Calu3 (cell line): ENCODE measurements at regions of chr11 and their contacts with region 1.

Region 1: GRCh38 chr11:12802418-12803085 is 128.3 kb downstream of the TEAD1 start:
- DNase-seq: peak; percentile 93
- H3K4me3 Mint-ChIP-seq: peak overlapping the region; percentile 66
- H3K27ac Mint-ChIP-seq: peak overlapping the region; percentile 99
- H3K4me1 Mint-ChIP-seq: peaks cover 99% of the 10 kb centered on the region
- H3K27me3 Mint-ChIP-seq: no peaks in the 10 kb centered on the region
- CTCF ChIP-seq: no peak

Region 2: DNA sequence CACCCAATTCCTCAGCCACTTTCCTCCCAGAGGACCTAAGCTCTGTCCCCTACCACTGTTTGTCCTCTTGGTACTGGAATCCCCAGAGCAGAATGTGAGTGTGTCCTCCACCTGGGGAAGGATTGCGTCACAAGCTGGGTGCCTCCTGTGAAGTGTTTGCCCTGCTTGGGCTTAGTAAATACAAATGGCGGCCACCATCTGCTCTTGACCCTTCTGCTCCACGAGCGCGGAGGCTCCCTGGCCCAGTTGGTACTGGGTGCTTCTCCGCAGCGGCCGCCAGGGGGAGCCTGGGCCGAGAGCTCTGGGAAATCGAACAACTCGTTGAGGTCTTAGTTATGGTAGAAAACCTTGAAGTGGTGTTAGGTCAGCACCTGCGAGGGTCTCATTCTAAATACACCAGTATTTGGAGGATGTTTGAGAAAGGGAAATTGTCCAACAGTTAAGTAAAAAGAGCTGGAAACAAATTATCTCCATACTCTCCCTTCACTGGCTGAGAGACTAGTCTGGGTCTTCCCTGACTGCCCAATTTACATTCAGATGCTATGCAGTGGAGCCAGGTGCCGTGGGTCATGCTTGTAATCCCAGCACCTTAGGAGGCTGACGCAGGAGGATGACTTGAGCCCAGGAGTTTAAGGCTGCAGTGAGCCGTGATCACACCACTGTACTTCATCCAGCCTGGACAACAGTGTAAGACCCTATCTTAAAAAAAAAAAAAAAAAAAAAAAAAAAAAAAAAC is 203.0 kb before region 1 on chr11:
- CTCF ChIA-PET with region 1: interaction called, 3 read pairs
- intact Hi-C with region 1: loop called (anchors 10 kb)
- DNase-seq: peak; percentile 78
- H3K4me3 Mint-ChIP-seq: no peak overlapping the region
- H3K27ac Mint-ChIP-seq: no peak overlapping the region
- H3K4me1 Mint-ChIP-seq: peaks cover 12% of the 10 kb centered on the region
- H3K27me3 Mint-ChIP-seq: no peaks in the 10 kb centered on the region
- CTCF ChIP-seq: peak; percentile 89

Region 3: DNA sequence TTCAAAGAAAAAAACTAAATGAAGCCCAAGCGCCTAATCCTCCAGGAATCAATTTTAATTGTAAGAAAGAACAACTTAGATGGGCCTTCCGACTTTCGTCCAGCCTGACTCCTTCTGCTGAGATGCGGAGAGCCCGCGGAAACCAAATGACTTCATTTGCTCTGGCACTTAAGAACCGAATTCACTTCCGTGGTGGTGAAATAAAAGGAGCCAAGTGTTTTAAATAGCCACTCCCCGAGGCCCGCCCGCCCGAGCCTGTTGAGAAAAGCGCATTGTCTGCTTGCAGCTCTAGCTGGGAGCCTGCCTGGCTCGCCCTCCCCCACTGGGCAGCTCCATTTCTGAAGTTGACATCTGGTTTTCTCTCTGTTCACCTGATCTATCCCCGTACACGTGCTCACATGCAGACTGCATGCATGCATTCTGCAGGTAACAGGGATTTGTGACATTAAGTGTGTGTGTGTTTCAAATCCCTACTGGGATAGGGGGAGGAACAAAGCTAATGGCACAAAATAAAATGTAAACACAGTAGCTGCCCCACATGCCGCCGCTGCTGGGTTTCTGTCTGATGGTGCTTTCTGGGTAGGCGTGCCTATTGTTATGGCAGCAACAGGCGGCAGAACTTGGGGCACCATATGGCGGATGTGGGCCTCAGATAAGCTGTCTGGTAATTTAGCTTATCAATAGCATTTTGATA is 122.2 kb before region 1 on chr11:
- CTCF ChIA-PET with region 1: interaction called, 4 read pairs
- intact Hi-C with region 1: loop called (anchors 2 kb)
- DNase-seq: peak; percentile 90
- H3K4me3 Mint-ChIP-seq: peak overlapping the region; percentile 59
- H3K27ac Mint-ChIP-seq: peak overlapping the region; percentile 79
- H3K4me1 Mint-ChIP-seq: peaks cover 71% of the 10 kb centered on the region
- H3K27me3 Mint-ChIP-seq: no peaks in the 10 kb centered on the region
- CTCF ChIP-seq: no peak

Region 4: DNA sequence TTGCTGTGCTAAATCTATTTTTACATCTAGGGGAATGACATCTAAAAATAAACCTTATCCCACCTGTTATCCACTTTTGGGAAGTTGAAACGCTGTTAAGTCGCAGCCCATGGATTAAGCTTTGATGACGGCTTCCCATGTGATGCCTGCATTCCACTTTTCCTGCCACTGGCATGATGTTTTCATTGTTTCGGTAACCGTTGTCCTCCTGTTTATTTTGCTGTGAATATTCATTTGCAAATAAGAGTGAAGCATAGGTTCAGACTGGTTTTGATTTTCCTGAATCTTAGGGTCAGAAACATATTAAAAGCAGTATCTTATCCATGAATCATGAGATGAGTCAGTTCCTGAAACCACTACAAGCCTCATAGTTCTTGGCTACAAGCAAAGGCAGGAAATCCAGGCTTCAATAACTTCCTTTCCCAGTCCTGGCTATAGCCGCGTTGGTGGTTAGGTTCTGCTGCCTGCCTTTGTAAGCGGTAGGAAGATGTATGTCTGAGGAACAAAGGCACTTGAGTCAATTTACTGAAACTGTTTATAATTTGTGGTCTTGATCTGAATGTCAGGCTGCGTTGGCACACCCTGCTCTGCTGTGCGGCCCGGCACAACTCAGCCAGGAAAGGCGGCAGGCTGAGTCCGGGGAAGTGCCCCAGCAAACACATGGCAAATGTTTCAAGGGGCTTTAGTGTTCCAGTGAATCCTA is 108.9 kb before region 1 on chr11:
- CTCF ChIA-PET with region 1: interaction called, 3 read pairs
- intact Hi-C with region 1: loop called (anchors 5 kb)
- DNase-seq: peak; percentile 59
- H3K4me3 Mint-ChIP-seq: peak overlapping the region; percentile 62
- H3K27ac Mint-ChIP-seq: peak overlapping the region; percentile 94
- H3K4me1 Mint-ChIP-seq: peaks cover 83% of the 10 kb centered on the region
- H3K27me3 Mint-ChIP-seq: no peaks in the 10 kb centered on the region
- CTCF ChIP-seq: no peak

Region 5: GRCh38 chr11:12754582-12755234 is 47.8 kb before region 1 on chr11:
- CTCF ChIA-PET with region 1: no interaction called
- intact Hi-C with region 1: loop called (anchors 5 kb)
- DNase-seq: no peak
- H3K4me3 Mint-ChIP-seq: no peak overlapping the region
- H3K27ac Mint-ChIP-seq: no peak overlapping the region
- H3K4me1 Mint-ChIP-seq: peaks cover 70% of the 10 kb centered on the region
- H3K27me3 Mint-ChIP-seq: no peaks in the 10 kb centered on the region
- CTCF ChIP-seq: no peak

Region 6: DNA sequence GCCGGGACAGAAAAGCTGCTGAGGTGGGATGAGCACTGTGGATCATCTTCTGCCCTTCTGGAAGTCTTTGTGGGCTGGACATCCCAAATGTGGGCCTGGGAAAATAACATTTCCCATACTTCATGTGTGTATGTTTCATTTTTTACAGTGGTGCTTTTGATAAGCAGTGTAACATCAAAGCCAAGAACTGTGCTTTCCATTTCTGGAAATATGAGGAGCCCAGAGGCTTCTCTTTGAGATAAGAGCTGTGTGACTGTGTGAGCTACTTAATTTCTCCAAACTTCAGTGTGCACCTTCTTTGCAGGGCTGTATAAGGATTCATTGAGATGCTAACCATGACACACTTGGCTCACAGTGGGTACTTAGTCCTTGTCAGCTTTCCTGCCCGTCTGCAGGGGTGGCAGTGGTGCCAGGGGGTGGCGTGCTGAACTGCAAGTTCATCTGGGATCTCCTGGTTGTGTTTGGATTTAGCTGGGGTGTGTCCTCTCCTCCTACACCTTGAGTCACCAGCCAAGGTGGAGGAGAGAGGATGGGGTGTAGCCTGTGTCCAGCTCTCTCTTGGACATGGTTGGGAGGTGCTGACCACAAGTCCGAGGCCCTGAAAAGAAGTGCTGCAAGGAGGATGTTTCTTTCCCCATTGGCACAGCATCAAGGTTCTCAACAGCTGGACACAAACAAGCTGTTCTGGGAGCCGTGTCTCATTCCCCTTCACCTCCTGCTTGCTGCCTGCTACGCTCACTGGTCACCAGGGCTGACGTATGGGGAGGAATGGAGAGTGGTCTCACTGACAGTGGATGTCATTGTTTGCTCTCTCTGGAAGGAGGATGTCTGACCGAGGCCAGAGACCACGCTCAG is 11.0 kb after region 1 on chr11:
- CTCF ChIA-PET with region 1: interaction called, 14 read pairs
- intact Hi-C with region 1: no loop called
- DNase-seq: peak; percentile 42
- H3K4me3 Mint-ChIP-seq: no peak overlapping the region
- H3K27ac Mint-ChIP-seq: no peak overlapping the region
- H3K4me1 Mint-ChIP-seq: peaks cover 61% of the 10 kb centered on the region
- H3K27me3 Mint-ChIP-seq: no peaks in the 10 kb centered on the region
- CTCF ChIP-seq: no peak

Region 7: DNA sequence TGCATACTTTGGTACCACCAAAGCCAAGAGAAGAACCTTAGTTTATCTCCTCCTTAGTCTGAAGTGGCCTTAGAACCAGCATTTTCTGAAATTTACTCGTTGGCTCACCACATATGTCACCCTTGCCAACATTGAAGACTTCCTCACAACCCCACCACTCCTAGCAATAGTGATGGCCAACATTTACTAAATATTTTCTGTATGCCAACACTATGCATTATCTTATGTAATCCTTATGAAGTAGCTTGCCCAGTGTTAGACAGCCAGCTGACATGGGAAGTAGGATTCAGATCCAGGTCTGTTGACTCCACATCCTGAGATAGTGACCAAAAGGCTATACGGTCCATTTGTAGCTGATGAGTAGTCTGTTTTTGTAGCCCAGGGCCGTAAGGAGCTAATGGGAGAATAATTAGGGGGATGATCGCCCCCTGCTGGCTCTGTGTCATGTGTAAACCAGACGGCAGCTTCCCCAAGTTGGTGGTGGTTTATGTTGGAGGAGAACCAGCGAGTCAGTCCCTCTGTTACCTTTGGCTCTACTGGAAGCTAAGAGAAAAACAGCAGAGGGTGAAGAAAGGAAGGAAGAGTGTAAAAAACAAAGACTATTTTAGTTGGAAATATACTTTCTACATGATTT is 86.1 kb after region 1 on chr11:
- CTCF ChIA-PET with region 1: interaction called, 4 read pairs
- intact Hi-C with region 1: loop called (anchors 5 kb)
- DNase-seq: peak; percentile 82
- H3K4me3 Mint-ChIP-seq: no peak overlapping the region
- H3K27ac Mint-ChIP-seq: peak overlapping the region; percentile 33
- H3K4me1 Mint-ChIP-seq: no peaks in the 10 kb centered on the region
- H3K27me3 Mint-ChIP-seq: no peaks in the 10 kb centered on the region
- CTCF ChIP-seq: peak; percentile 67